ENCODE measurements at regions of chr6 and their contacts with region 1.

Region 1: DNA sequence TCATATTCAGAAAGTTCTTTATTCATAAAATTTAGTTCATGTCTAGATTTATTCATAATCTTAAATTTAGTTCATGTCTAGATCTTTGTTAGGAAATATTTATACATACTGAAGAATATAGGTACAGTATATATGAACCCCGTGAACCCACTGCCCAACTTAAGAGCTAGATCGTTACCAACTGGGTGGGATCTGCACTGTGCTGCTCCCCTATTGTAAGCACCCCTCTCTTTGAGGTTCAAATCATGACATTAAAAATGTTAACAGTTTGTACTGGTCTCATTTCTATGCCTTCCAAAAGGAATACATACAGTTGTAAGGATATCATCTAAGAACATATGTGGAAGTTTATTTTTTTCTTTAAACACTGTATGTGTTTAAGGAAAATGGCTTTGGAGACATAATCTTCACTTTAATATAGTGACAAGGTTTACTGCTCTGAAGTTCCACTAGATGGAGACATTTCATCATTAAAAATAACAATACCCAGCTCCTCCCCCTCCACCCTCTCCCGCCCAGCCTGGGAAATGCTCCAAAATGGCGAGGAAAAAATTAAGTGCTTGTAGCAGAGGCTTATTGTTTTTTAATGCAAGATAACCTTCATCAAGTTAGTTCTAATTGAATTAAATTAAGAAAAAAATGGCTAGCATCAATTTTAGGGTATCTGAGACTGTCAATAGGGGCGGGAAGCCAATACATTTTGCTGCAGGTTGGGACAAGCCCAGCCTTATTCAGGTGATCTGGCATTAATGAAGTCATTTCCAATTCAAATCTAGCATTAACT is 104.1 kb upstream of the TRAF3IP2 start:
- DNase-seq: no peak
- H3K4me3 ChIP-seq: peak overlapping the region in 1 of 8 donors; percentile 26
- H3K27ac ChIP-seq: peak overlapping the region in 6 of 8 donors; percentile 22 to 71 (median 57)
- H3K4me1 ChIP-seq: peaks cover 9 to 57% (median 24%) of the 10 kb centered on the region in 6 donors
- H3K27me3 ChIP-seq: no peaks in the 10 kb centered on the region
- CTCF ChIP-seq: peak; percentile 59 to 92 (median 77)
- POLR2A ChIP-seq: no peak

Region 2: GRCh38 chr6:111997853-111998208 is 288.0 kb after region 1 on chr6:
- intact Hi-C with region 1: loop called (anchors 2 kb)
- DNase-seq: no peak
- H3K4me3 ChIP-seq: no peak overlapping the region
- H3K27ac ChIP-seq: no peak overlapping the region
- H3K4me1 ChIP-seq: peaks cover 0 to 25% (median 13%) of the 10 kb centered on the region in 6 donors
- H3K27me3 ChIP-seq: peaks cover 0 to 5% (median 0%) of the 10 kb centered on the region in 7 donors
- CTCF ChIP-seq: no peak
- POLR2A ChIP-seq: no peak

Region 3: GRCh38 chr6:112043032-112044007 is 333.5 kb after region 1 on chr6:
- intact Hi-C with region 1: loop called (anchors 5 kb)
- DNase-seq: peak; percentile 97
- H3K4me3 ChIP-seq: peak overlapping the region; percentile 48 to 76 (median 56)
- H3K27ac ChIP-seq: peak overlapping the region; percentile 73 to 92 (median 88)
- H3K4me1 ChIP-seq: peaks cover 0 to 13% (median 3%) of the 10 kb centered on the region in 6 donors
- H3K27me3 ChIP-seq: no peaks in the 10 kb centered on the region
- CTCF ChIP-seq: peak; percentile 88 to 99 (median 95)
- POLR2A ChIP-seq: peak in 1 of 3 donors; percentile 66

Region 4: DNA sequence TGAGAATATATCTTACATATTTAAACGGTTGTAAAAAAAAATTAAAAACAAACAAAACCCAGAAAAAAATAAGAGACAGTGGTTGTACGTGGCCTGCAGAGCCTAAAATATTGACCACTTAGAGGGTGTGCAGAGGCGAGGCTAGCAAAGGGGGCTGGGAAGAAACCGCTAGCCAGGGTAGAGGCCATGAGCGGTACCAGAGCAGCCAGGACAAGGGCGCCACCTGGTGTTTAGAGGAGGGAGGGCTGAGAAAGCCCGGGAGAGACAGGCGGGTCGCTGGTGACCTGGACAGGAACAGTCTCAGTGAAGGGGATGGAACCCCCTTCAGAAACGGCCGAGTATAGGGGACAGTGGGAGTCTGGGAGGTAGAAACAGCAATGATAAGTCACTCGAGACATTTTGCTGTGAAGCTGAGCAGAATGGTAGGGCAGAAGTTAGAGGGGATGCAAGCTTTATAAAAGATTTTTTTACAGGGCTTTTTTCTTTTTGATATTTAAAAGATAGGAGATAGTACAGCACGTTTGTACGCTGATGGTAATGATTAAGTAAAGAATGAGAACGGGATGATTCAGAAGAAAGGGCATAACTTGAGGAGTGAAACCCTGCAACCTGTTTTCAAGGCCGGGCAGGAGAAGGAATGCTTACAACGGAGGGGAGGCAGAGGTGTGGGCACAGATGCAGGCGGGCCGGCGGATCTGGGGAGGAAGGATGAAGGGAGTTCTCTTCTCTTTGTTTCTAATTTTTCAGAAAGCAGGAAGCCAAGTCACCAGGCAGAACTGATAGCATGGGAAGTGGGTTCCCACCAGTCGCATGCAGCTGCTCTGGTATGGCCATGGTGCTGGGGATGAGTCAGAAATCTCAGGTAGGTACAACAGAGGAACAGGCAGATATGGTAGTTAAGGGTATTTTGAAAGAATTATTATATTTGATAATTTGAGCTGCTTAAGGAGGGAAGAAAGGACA is 453.8 kb after region 1 on chr6:
- intact Hi-C with region 1: loop called (anchors 10 kb)
- DNase-seq: peak; percentile 90
- H3K4me3 ChIP-seq: peak overlapping the region in 1 of 8 donors; percentile 19
- H3K27ac ChIP-seq: no peak overlapping the region
- H3K4me1 ChIP-seq: peaks cover 0 to 10% (median 7%) of the 10 kb centered on the region in 6 donors
- H3K27me3 ChIP-seq: peaks cover 0 to 61% (median 21%) of the 10 kb centered on the region in 7 donors
- CTCF ChIP-seq: peak; percentile 58 to 91 (median 87)
- POLR2A ChIP-seq: no peak